Gastrocnemius medialis (tissue), 4 donors: ENCODE measurements at regions of chr6 and their contacts with region 1.

Region 1: GRCh38 chr6:45986746-45987274 is 28.9 kb downstream of the CLIC5 start:
- DNase-seq: peak; percentile 79 to 89
- ATAC-seq: peak; percentile 95 to 96
- H3K4me3 ChIP-seq: no peak overlapping the region
- H3K27ac ChIP-seq: peak overlapping the region; percentile 89 to 94 (median 90)
- H3K4me1 ChIP-seq: peaks cover 85 to 97% of the 10 kb centered on the region in 2 donors
- H3K27me3 ChIP-seq: no peaks in the 10 kb centered on the region
- CTCF ChIP-seq: no peak
- POLR2A ChIP-seq: no peak

Region 2: GRCh38 chr6:45896783-45897441 is 89.9 kb before region 1 on chr6:
- in situ Hi-C with region 1: no loop called
- intact Hi-C with region 1: no loop called
- DNase-seq: no peak
- ATAC-seq: no peak
- H3K4me3 ChIP-seq: no peak overlapping the region
- H3K27ac ChIP-seq: peak overlapping the region in 1 of 4 donors; percentile 7
- H3K4me1 ChIP-seq: peaks cover 26 to 30% of the 10 kb centered on the region in 2 donors
- H3K27me3 ChIP-seq: no peaks in the 10 kb centered on the region
- CTCF ChIP-seq: no peak
- POLR2A ChIP-seq: no peak

Region 3: GRCh38 chr6:45972795-45973503 is 13.9 kb before region 1 on chr6:
- in situ Hi-C with region 1: no loop called
- intact Hi-C with region 1: loop called (anchors 1 kb)
- DNase-seq: peak in 1 of 2 donors; percentile 23
- ATAC-seq: peak; percentile 37 to 69
- H3K4me3 ChIP-seq: no peak overlapping the region
- H3K27ac ChIP-seq: peak overlapping the region; percentile 55 to 78 (median 66)
- H3K4me1 ChIP-seq: peaks cover 75 to 82% of the 10 kb centered on the region in 2 donors
- H3K27me3 ChIP-seq: no peaks in the 10 kb centered on the region
- CTCF ChIP-seq: no peak
- POLR2A ChIP-seq: no peak

Region 4: DNA sequence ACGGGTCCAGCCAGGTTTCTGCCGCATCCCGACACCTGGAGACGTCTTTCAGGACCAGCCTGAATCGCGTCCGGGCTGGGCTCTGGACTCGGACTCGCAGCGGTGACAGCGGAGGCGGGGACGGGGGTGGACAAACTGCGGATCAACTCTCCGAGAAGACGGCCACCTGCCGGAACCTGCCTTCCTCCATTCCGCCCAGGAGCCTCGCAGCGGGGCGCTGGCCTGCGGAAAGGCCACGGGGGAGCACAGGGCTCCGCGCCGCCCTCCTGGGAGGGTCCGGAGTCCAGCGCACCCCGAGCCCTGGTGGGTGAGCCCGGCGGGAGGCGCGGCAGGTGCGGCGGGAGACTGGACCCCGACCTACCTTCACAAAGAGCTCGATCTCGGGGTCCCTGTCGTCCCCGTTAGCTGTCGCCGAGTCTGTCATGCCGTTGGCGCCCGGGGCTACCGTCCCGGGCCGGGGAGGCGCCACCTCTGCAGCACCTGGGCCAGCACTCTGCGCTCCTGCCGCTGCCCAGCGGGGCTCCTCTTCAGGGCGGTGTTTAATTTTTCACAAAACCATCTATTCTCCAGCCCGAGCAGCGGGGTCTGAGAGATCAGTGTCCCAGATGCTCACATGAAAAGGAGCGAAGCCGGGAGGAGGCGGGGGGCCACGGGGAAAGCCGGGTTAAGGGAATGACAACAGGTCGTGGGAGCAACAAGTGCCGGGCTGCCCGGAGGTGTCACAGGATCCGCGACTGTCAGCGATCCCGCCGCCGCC is 28.5 kb after region 1 on chr6 and contains the start of gene CLIC5:
- in situ Hi-C with region 1: no loop called
- intact Hi-C with region 1: loop called (anchors 2 kb)
- DNase-seq: peak; percentile 72 to 83
- ATAC-seq: peak; percentile 68 to 69
- H3K4me3 ChIP-seq: peak within 1 kb of the TSS; percentile 68 to 84 (median 81)
- H3K27ac ChIP-seq: peak within 1 kb of the TSS; percentile 89 to 99 (median 98)
- H3K4me1 ChIP-seq: peaks cover 40 to 43% of the 10 kb centered on the region in 2 donors
- H3K27me3 ChIP-seq: no peaks in the 10 kb centered on the region
- CTCF ChIP-seq: peak in 2 of 5 experiments; percentile 7 to 10
- POLR2A ChIP-seq: peak; percentile 97 to 98
- total RNA-seq, gene CLIC5: 78.6 to 97.0 (median 91.7) TPM

Region 5: DNA sequence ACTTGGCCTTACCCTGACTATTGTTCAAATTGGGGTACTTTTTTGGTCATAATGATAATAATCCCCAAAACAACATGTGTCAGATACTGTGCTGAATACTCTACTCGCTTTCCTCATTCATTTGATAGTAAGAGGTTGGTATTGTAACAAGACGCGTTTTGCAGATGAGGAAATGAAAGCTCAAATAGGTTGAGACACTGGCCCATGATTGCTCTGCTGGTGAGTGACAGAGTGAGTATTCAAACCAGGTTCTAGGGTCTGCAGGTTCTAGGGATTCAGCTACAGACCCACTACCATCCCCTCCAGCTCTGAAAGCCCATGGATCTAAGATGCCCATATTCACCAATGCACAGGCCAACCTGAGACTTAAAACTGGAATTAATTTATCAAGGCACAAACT is 141.7 kb after region 1 on chr6:
- in situ Hi-C with region 1: no loop called
- intact Hi-C with region 1: no loop called
- DNase-seq: no peak
- ATAC-seq: no peak
- H3K4me3 ChIP-seq: peak overlapping the region; percentile 72 to 97 (median 88)
- H3K27ac ChIP-seq: peak overlapping the region; percentile 3 to 92 (median 90)
- H3K4me1 ChIP-seq: peaks cover 24 to 25% of the 10 kb centered on the region in 2 donors
- H3K27me3 ChIP-seq: no peaks in the 10 kb centered on the region
- CTCF ChIP-seq: no peak
- POLR2A ChIP-seq: no peak